PC-9 (cell line): ENCODE measurements at regions of chr2 and their contacts with region 1.

Region 1: GRCh38 chr2:236240228-236241038 is 23.8 kb downstream of the ASB18 start:
- DNase-seq: peak; percentile 91 to 93
- H3K4me3 ChIP-seq: no peak overlapping the region
- H3K27ac ChIP-seq: peak overlapping the region; percentile 62
- H3K4me1 ChIP-seq: peaks cover 19% of the 10 kb centered on the region
- H3K27me3 ChIP-seq: 0 out of 2 replicates have a peak, but pooled peaks cover 1% of the 10 kb centered on the region
- CTCF ChIP-seq: no peak

Region 2: GRCh38 chr2:236045251-236046235 is 194.9 kb before region 1 on chr2:
- CTCF ChIA-PET with region 1: no interaction called
- POLR2A ChIA-PET with region 1: no interaction called
- intact Hi-C with region 1: loop called (anchors 1 kb)
- DNase-seq: peak; percentile 91 to 95
- H3K4me3 ChIP-seq: no peak overlapping the region
- H3K27ac ChIP-seq: peak overlapping the region; percentile 44
- H3K4me1 ChIP-seq: peaks cover 36% of the 10 kb centered on the region
- H3K27me3 ChIP-seq: no peaks in the 10 kb centered on the region
- CTCF ChIP-seq: no peak

Region 3: DNA sequence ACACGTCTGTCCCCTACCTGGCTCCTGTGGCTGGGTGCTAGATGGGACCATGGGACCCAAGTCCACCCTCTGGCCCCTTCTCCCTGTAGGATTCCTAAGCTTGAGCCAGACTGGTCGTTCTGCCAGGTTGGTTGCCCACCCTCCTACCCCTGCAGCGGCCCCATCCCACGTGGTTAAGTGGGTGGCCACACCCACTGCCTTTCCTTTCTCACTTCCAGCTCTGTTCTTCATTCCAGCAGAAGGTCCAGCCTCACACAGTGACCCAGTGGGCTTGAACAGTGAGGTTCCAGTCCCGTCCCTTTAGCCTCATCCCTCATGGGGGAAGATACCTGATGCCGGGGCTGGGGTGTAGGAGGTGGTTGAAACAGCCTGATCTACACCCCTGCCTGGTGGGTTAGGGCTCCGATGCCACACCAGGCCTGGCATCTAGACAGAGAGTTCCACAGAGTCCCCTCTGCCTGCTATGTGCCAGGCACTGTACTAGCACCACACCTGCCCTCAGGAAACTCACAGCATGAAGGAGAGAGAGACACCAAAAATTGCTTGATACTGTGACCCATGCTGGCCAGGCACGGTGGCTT is 161.7 kb before region 1 on chr2:
- CTCF ChIA-PET with region 1: no interaction called
- POLR2A ChIA-PET with region 1: interaction called, 3 read pairs
- intact Hi-C with region 1: loop called (anchors 1 kb)
- DNase-seq: no peak
- H3K4me3 ChIP-seq: no peak overlapping the region
- H3K27ac ChIP-seq: peak overlapping the region; percentile 67
- H3K4me1 ChIP-seq: peaks cover 17% of the 10 kb centered on the region
- H3K27me3 ChIP-seq: no peaks in the 10 kb centered on the region
- CTCF ChIP-seq: no peak

Region 4: GRCh38 chr2:236273126-236273525 is 32.7 kb after region 1 on chr2:
- CTCF ChIA-PET with region 1: no interaction called
- POLR2A ChIA-PET with region 1: no interaction called
- intact Hi-C with region 1: no loop called
- DNase-seq: no peak
- H3K4me3 ChIP-seq: no peak overlapping the region
- H3K27ac ChIP-seq: no peak overlapping the region
- H3K4me1 ChIP-seq: no peaks in the 10 kb centered on the region
- H3K27me3 ChIP-seq: peaks cover 4% of the 10 kb centered on the region; the same call in 1 of the 2 replicates
- CTCF ChIP-seq: no peak

Region 5: GRCh38 chr2:236600900-236601299 is 360.5 kb after region 1 on chr2:
- CTCF ChIA-PET with region 1: no interaction called
- POLR2A ChIA-PET with region 1: no interaction called
- intact Hi-C with region 1: no loop called
- DNase-seq: no peak
- H3K4me3 ChIP-seq: no peak overlapping the region
- H3K27ac ChIP-seq: no peak overlapping the region
- H3K4me1 ChIP-seq: no peaks in the 10 kb centered on the region
- H3K27me3 ChIP-seq: peaks cover 38% of the 10 kb centered on the region
- CTCF ChIP-seq: no peak

Region 6: DNA sequence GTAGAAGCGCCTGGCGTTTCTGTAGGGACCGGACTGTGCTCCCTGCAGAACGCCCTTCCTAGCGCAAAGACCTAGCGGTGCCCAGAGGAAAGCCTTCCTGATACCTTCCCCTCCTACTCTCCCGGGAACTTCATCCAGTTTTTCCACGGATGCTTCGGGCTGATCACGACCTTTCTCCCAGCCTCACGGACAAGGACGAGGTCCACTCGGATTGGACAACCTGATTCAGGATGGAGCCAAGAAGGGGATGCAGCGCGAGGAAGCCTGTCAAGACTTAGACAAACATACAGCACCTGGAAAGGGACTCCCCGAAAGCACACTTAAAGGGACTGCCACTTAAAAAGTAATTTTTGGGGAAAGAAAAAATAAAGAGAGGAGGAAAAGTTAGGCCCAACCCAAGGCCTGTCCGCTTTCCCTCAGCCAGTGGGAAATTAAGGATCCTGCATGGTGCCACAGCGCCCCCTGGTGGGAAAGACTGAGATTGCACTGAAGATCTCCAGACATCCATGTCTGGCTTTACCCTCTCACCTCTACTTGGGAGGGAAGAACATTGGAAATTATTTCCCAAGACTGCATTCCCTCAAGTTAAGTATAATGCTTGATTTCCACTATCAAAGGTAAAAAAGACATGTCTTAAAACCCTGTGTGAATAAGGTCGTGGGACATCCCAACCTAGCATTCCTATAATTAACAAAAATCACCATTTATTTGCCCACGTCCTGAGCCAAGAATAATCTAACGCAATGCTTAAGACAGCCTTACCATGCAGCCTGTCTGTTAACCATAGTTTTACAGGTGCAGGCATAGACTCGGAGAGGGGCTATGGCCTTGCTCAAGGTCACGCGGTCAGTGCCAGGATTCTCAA is 831.9 kb after region 1 on chr2:
- CTCF ChIA-PET with region 1: no interaction called
- POLR2A ChIA-PET with region 1: no interaction called
- intact Hi-C with region 1: loop called (anchors 1 kb)
- DNase-seq: peak; percentile 40 to 76
- H3K4me3 ChIP-seq: no peak overlapping the region
- H3K27ac ChIP-seq: no peak overlapping the region
- H3K4me1 ChIP-seq: peaks cover 22% of the 10 kb centered on the region
- H3K27me3 ChIP-seq: 0 out of 2 replicates have a peak, but pooled peaks cover 8% of the 10 kb centered on the region
- CTCF ChIP-seq: peak; percentile 100